Naive thymus-derived CD4-positive, alpha-beta T cell (primary cell): ENCODE measurements at regions of chr5 and their contacts with region 1.

Region 1: GRCh38 chr5:188488-189481 is 2.5 kb upstream of the LRRC14B start:
- DNase-seq: peak; percentile 71 to 87 (median 86)
- ATAC-seq: peak; percentile 97
- H3K4me3 ChIP-seq: no peak overlapping the region
- H3K4me3 Mint-ChIP-seq: peak overlapping the region; percentile 20 to 70 (median 49)
- H3K27ac ChIP-seq: no peak overlapping the region
- H3K27ac Mint-ChIP-seq: peak overlapping the region in 3 of 9 donors; percentile 33 to 85 (median 52)
- H3K4me1 ChIP-seq: peaks cover 0 to 6% of the 10 kb centered on the region in 2 donors
- H3K4me1 Mint-ChIP-seq: peaks cover 5 to 12% (median 11%) of the 10 kb centered on the region in 7 donors
- H3K27me3 ChIP-seq: no peaks in the 10 kb centered on the region
- H3K27me3 Mint-ChIP-seq: peaks cover 0 to 5% (median 5%) of the 10 kb centered on the region in 5 donors

Region 2: GRCh38 chr5:217860-218456 is 29.2 kb after region 1 on chr5 and contains the starts of genes CCDC127 and SDHA:
- CTCF ChIA-PET with region 1: interaction called, 7 read pairs
- POLR2A ChIA-PET with region 1: interaction called, 10 read pairs
- intact Hi-C with region 1: loop called (anchors 1 kb)
- DNase-seq: peak; percentile 94 to 100 (median 98)
- ATAC-seq: peak; percentile 90
- H3K4me3 ChIP-seq: peak within 1 kb of the TSS; percentile 65
- H3K4me3 Mint-ChIP-seq: peak within 1 kb of the TSS; percentile 93 to 97 (median 96)
- H3K27ac ChIP-seq: peak within 1 kb of the TSS; percentile 92
- H3K27ac Mint-ChIP-seq: peak within 1 kb of the TSS; percentile 87 to 97 (median 95)
- H3K4me1 ChIP-seq: peaks cover 13 to 14% of the 10 kb centered on the region in 2 donors
- H3K4me1 Mint-ChIP-seq: peaks cover 44 to 69% (median 57%) of the 10 kb centered on the region in 7 donors
- H3K27me3 ChIP-seq: no peaks in the 10 kb centered on the region
- H3K27me3 Mint-ChIP-seq: peaks cover 0 to 2% (median 0%) of the 10 kb centered on the region in 5 donors
- total RNA-seq, gene CCDC127: 2.9 to 9.7 (median 6.5) TPM
- total RNA-seq, gene SDHA: 120 to 180 (median 148) TPM

Region 3: DNA sequence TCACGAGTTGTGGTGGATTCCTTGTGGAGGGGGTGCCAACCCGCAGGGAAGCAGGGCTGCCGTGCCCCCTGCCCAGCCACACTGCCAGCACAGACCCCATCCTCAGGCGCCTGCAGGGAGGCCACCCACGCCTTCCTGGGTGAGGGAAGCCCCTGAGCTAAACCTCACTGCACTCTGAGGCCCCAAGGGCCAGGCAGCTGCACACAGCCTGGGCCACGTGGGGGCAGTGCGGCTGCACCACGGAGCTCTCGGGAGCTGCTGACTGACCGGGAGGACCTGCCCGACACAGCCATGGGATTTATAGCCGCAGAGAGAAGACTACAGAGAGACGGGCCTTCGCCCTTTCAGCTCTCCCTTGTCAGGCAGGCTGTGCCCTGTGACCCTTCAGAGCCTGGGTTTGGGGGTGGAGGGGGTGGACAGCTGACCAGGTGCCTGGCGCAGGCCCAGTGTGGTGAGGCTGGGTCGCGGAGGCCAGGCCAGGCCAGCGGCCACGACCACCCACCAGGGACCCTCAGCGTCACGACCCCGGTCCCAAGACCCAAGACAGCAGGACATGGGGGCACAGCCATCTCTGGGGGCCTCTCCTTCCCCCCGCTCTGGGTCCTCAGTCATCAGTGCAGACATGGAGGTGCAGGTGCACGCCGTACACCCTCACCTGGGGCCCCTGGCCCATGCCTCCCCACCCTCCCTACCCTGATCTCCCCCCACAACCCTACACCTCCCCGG is 128.5 kb after region 1 on chr5:
- CTCF ChIA-PET with region 1: no interaction called
- POLR2A ChIA-PET with region 1: no interaction called
- intact Hi-C with region 1: no loop called
- DNase-seq: peak in 1 of 9 donors; percentile 52
- ATAC-seq: peak; percentile 48
- H3K4me3 ChIP-seq: no peak overlapping the region
- H3K4me3 Mint-ChIP-seq: no peak overlapping the region
- H3K27ac ChIP-seq: no peak overlapping the region
- H3K27ac Mint-ChIP-seq: no peak overlapping the region
- H3K4me1 ChIP-seq: no peaks in the 10 kb centered on the region
- H3K4me1 Mint-ChIP-seq: peaks cover 0 to 11% (median 9%) of the 10 kb centered on the region in 7 donors
- H3K27me3 ChIP-seq: no peaks in the 10 kb centered on the region
- H3K27me3 Mint-ChIP-seq: peaks cover 6 to 17% (median 12%) of the 10 kb centered on the region in 5 donors

Region 4: DNA sequence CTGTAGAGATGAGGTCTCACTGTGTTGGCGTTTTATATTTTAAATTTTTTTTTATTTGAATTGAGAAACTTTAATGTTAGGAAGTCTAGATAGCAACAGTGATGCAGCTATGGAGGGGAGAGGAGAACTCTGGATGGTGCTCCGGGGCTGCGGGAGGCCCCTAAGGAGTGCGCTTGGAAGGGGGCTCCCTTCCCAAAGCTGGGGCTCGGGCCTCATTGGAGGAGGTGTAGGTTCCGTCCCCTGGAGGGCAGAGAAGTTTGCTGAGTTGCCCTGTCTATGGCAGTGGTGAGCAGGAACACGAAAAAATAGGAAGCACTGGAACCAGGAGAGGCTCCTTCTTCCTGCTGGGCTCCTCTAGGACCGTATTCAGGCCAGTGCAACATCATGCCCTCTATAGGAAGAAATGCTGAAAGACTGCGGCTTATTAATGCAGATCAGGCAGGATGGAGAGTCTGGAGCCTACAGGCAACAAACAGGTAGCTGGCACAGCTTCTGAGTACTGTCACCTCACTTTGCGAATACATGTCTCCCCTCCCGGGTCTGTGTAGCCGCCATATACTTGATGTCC is 148.9 kb after region 1 on chr5:
- CTCF ChIA-PET with region 1: no interaction called
- POLR2A ChIA-PET with region 1: no interaction called
- intact Hi-C with region 1: no loop called
- DNase-seq: no peak
- ATAC-seq: no peak
- H3K4me3 ChIP-seq: no peak overlapping the region
- H3K4me3 Mint-ChIP-seq: no peak overlapping the region
- H3K27ac ChIP-seq: no peak overlapping the region
- H3K27ac Mint-ChIP-seq: no peak overlapping the region
- H3K4me1 ChIP-seq: no peaks in the 10 kb centered on the region
- H3K4me1 Mint-ChIP-seq: peaks cover 0 to 65% (median 2%) of the 10 kb centered on the region in 7 donors
- H3K27me3 ChIP-seq: no peaks in the 10 kb centered on the region
- H3K27me3 Mint-ChIP-seq: peaks cover under 1 to 3% (median 2%) of the 10 kb centered on the region in 5 donors

Region 5: DNA sequence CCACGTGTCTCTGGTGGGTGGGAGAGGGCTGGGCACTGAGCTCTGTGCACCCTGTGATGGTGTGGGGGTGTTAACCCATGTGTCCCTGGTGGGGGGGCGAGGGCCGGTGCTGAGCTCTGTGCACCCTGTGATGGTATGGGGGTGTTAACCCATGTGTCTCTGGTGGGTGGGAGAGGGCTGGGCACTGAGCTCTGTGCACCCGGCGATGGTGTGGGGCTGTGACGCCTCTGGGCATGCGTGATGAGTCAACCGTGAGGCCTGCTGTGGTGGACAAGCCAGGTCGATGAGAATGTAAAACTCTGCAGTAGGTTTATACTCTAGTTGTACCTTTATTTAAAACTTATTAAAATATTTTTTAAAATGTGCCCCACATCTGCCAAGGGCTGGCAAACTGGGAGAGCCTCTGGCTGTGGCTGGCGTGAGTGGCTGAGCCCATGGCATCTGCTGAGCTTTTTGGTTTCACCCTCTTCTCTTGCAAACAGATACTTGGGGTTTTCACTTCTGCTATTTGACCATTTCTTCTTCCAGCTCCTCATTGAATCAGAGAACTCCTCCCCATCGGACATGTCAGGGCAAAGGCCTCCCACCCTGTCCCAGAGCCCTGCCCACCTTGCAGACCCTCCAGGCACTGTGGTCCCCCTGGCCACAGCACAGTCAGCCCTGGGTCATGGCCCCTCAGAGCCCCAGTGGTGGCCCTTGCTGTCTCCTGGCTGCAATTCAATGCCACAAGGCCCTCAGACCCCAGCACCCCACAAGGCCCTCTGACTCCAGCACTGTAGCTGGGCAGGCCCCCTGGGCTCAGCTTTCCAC is 235.7 kb after region 1 on chr5:
- CTCF ChIA-PET with region 1: interaction called, 11 read pairs
- POLR2A ChIA-PET with region 1: interaction called, 5 read pairs
- intact Hi-C with region 1: loop called in 1 of 2 experiments (anchors 1 kb)
- DNase-seq: no peak
- ATAC-seq: no peak
- H3K4me3 ChIP-seq: no peak overlapping the region
- H3K4me3 Mint-ChIP-seq: no peak overlapping the region
- H3K27ac ChIP-seq: no peak overlapping the region
- H3K27ac Mint-ChIP-seq: peak overlapping the region in 1 of 9 donors; percentile 63
- H3K4me1 ChIP-seq: no peaks in the 10 kb centered on the region
- H3K4me1 Mint-ChIP-seq: peaks cover 0 to 18% (median 2%) of the 10 kb centered on the region in 7 donors
- H3K27me3 ChIP-seq: no peaks in the 10 kb centered on the region
- H3K27me3 Mint-ChIP-seq: peaks cover 0 to 11% (median 0%) of the 10 kb centered on the region in 5 donors

Region 6: GRCh38 chr5:431001-431710 is 242.4 kb after region 1 on chr5:
- CTCF ChIA-PET with region 1: interaction called, 11 read pairs
- POLR2A ChIA-PET with region 1: interaction called, 5 read pairs
- intact Hi-C with region 1: loop called (anchors 1 kb)
- DNase-seq: peak in 5 of 9 donors; percentile 9 to 55 (median 29)
- ATAC-seq: peak; percentile 70
- H3K4me3 ChIP-seq: no peak overlapping the region
- H3K4me3 Mint-ChIP-seq: no peak overlapping the region
- H3K27ac ChIP-seq: no peak overlapping the region
- H3K27ac Mint-ChIP-seq: no peak overlapping the region
- H3K4me1 ChIP-seq: no peaks in the 10 kb centered on the region
- H3K4me1 Mint-ChIP-seq: peaks cover 0 to 2% (median 0%) of the 10 kb centered on the region in 7 donors
- H3K27me3 ChIP-seq: no peaks in the 10 kb centered on the region
- H3K27me3 Mint-ChIP-seq: peaks cover 0 to 9% (median 3%) of the 10 kb centered on the region in 5 donors